ENCODE measurements at regions of chr19 and their contacts with region 1.

Region 1: DNA sequence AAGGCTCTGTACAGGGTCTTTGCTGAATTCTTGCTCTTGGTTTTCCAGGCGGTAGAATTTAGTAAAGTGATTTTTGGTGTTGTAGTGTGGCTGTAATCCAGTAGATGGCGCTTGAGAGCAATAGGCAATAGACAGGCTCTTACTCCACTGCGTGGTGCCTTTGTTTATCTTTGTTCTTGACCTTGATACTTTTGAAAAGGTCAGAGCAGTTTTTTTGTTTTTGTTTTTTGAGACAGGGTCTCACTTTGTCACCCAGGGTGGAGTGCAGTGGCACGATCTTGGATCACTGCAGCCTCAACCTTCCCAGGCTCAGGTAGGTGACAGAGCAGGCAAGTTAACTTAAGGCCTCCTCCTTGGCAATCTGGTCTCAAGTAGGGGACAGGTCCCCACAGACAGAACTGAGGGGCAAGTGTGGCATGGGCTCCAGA is 12.2 kb upstream of the LILRA5 start:
- DNase-seq: peak; percentile 8
- ATAC-seq: peak; percentile 62
- H3K4me3 ChIP-seq: no peak overlapping the region
- H3K27ac ChIP-seq: no peak overlapping the region
- H3K4me1 ChIP-seq: no peaks in the 10 kb centered on the region
- H3K27me3 ChIP-seq: no peaks in the 10 kb centered on the region
- CTCF ChIP-seq: peak; percentile 48
- POLR2A ChIP-seq: no peak
- RAD21 ChIP-seq: no peak

Region 2: DNA sequence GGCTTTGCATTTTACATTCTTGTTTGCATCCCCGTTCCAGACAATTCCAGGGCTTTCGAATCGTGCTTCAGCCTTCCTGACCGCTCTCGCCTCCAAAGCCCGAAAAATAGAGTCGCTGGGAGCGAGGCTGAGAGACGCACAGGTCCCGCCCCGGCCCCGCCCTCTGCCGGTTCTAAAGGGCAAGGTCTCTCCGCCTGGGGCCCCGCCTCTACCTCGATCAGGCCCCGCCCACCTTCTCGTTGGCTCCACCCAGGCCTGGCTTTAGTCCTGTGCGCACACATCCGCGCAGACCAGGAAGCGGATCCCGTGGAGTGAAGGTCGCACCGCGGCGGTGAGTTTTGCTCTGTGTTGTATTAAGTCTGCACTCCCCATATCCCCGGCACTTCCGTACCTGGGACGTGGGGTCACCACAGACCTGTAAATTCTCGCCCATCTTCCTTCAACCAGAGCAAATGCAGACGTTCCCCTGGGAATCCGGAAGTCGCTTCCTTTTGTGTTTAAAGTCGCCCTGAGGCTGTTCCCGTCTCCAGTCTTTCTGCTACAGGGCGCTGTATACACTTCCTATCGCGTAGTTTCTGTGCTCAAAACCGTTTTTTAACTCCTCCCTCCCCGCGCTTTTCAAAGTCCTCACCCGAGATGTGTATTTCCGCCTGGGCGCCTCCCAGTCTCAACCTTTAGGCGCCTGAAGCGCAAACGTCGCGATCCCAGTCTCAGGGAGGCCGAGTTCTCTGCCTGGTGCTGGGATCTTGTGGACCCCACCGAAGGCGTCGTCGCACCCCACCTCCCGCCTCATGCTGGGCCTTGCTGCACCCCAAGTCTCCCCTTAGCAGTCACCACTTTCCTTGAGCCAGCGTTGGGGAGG is 1755.0 kb before region 1 on chr19 and contains the start of gene ZNF701:
- CTCF ChIA-PET with region 1: no interaction called
- POLR2A ChIA-PET with region 1: no interaction called
- dilution Hi-C with region 1: no loop called
- in situ Hi-C with region 1: no loop called
- intact Hi-C with region 1: no loop called
- DNase-seq: peak; percentile 88
- ATAC-seq: peak; percentile 99
- H3K4me3 ChIP-seq: peak within 1 kb of the TSS; percentile 78
- H3K27ac ChIP-seq: peak within 1 kb of the TSS; percentile 94
- H3K4me1 ChIP-seq: no peaks in the 10 kb centered on the region
- H3K27me3 ChIP-seq: no peaks in the 10 kb centered on the region
- CTCF ChIP-seq: peak; percentile 20; the same call in 1 of the 2 replicates
- POLR2A ChIP-seq: peak; percentile 90
- RAD21 ChIP-seq: no peak
- total RNA-seq, gene ZNF701: 12.2 and 12.5 TPM in 2 replicates

Region 3: GRCh38 chr19:54390942-54391577 is 65.9 kb after region 1 on chr19:
- CTCF ChIA-PET with region 1: no interaction called
- POLR2A ChIA-PET with region 1: no interaction called
- dilution Hi-C with region 1: no loop called
- in situ Hi-C with region 1: no loop called
- intact Hi-C with region 1: loop called (anchors 1 kb)
- DNase-seq: peak; percentile 60
- ATAC-seq: peak; percentile 68
- H3K4me3 ChIP-seq: no peak overlapping the region
- H3K27ac ChIP-seq: no peak overlapping the region
- H3K4me1 ChIP-seq: no peaks in the 10 kb centered on the region
- H3K27me3 ChIP-seq: no peaks in the 10 kb centered on the region; the same call in 1 of the 2 replicates
- CTCF ChIP-seq: peak; percentile 63
- POLR2A ChIP-seq: no peak
- RAD21 ChIP-seq: peak; percentile 52

Measured in IMR-90 (cell line).